H1 (cell line): ENCODE measurements at regions of chr9 and their contacts with region 1.

Region 1: GRCh38 chr9:109320742-109321448 is at the start of gene EPB41L4B:
- DNase-seq: peak; percentile 89 to 97
- H3K4me3 ChIP-seq: peak within 1 kb of the TSS; percentile 78 to 87 (median 81)
- H3K27ac ChIP-seq: no peak within 1 kb of the TSS
- H3K4me1 ChIP-seq: peaks cover 13 to 19% (median 14%) of the 10 kb centered on the region in 4 experiments
- H3K27me3 ChIP-seq: peaks cover 0 to 8% (median 0%) of the 10 kb centered on the region in 4 experiments; a peak in 2 of 7 replicates
- CTCF ChIP-seq: peak; percentile 87 to 98 (median 91)
- EP300 ChIP-seq: peak in 1 of 2 experiments; percentile 90; a peak in 2 of 3 replicates
- POLR2A ChIP-seq: no peak
- RAD21 ChIP-seq: peak; percentile 86 to 93
- total RNA-seq, gene EPB41L4B: 23.7 and 25.0 TPM in 2 replicates

Region 2: DNA sequence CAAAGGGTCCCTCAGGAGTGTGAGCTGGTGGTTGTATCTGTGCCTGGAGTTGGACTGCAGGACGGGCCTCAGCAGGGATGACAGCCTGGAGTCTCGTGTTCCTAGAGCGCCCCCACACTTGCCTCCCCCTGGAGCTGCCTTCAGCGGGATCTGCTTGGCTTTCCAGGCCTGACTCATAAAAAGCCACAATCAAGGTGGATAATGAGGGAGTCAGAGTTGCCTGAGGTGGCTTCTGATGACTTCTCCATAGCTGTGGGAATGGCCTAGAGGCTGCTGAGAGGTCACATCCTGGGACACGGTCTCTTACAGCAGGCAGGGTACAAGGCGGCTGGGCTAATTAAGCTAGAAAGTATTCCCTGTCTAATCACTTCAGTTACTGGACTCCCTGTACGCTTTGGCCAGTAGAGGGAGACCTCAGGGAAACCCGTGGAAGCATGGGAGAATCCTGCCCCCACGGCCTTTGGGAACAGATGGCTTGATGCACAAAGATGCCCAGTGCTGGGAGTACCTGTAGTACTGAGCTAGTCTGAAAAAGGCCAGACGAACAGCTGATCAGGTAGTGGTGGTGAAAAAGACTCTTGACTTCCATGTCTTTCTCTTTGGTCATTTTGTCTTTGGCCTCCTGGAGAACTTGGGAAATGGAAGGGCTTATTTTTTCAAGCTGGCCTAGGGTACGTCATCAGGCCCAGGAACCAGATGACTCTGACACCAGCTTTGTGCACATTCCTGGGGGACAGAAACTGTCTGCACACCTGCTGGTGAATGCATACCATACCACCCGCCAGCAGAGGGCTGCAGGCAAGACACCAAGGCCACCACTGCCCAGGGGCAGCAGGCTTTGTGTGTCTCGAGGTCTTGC is 137.7 kb before region 1 on chr9:
- CTCF ChIA-PET with region 1: interaction called, 14 read pairs
- POLR2A ChIA-PET with region 1: no interaction called
- DNase-seq: peak in 1 of 2 experiments; percentile 58
- H3K4me3 ChIP-seq: no peak overlapping the region
- H3K27ac ChIP-seq: no peak overlapping the region
- H3K4me1 ChIP-seq: 0 out of 7 replicates have a peak, but pooled peaks cover 0 to 2% (median 0%) of the 10 kb centered on the region in 4 experiments
- H3K27me3 ChIP-seq: no peaks in the 10 kb centered on the region
- CTCF ChIP-seq: peak; percentile 47 to 66 (median 59)
- EP300 ChIP-seq: no peak
- POLR2A ChIP-seq: no peak
- RAD21 ChIP-seq: peak; percentile 42 to 53; a peak in 3 of 4 replicates

Region 3: GRCh38 chr9:109192732-109193361 is 128.0 kb before region 1 on chr9:
- CTCF ChIA-PET with region 1: interaction called, 23 read pairs
- POLR2A ChIA-PET with region 1: no interaction called
- DNase-seq: peak; percentile 31 to 73
- H3K4me3 ChIP-seq: no peak overlapping the region
- H3K27ac ChIP-seq: no peak overlapping the region
- H3K4me1 ChIP-seq: no peaks in the 10 kb centered on the region
- H3K27me3 ChIP-seq: no peaks in the 10 kb centered on the region; a peak in 1 of 7 replicates
- CTCF ChIP-seq: peak; percentile 80 to 86 (median 81)
- EP300 ChIP-seq: no peak
- POLR2A ChIP-seq: no peak
- RAD21 ChIP-seq: peak; percentile 87

Region 4: GRCh38 chr9:109213290-109214121 is 107.4 kb before region 1 on chr9:
- CTCF ChIA-PET with region 1: interaction called, 10 read pairs
- POLR2A ChIA-PET with region 1: no interaction called
- DNase-seq: no peak
- H3K4me3 ChIP-seq: no peak overlapping the region
- H3K27ac ChIP-seq: no peak overlapping the region
- H3K4me1 ChIP-seq: no peaks in the 10 kb centered on the region
- H3K27me3 ChIP-seq: no peaks in the 10 kb centered on the region
- CTCF ChIP-seq: no peak
- EP300 ChIP-seq: no peak
- POLR2A ChIP-seq: no peak
- RAD21 ChIP-seq: no peak

Region 5: DNA sequence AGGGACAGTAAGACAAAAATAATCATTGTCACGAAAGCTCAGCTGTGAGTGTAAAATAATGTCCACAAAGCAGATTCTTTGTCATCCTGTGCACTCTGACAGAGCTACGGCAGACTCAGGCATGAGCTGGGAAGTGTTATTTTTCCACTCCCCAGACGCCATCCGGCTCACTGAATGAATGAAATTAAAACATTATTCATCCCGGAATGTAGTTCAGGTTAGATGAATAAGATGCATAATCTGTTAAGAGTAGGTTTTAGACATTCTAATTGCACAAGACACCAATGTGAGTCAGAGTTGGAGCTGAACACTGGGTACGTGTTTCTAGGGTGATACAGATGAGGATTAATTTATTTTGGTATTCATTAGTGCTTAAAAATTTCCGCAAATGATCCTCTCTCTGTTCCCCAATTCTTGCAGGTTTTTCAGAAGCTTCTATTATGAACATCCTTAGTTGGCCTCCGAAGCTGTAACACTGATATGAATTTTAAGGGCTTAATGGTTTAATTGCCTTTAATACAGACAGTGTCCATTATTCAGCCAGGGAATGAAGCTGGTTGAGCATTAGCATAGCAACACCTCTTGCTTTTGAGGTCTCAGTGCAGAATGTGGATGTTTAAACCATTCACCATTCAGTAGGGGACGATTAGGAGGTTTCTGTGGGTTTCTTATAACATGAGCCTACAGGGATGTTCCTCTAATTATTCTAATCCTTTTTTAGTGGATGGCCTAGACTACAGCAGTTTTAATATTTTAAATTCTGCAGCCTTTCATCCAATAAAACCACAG is 88.3 kb before region 1 on chr9:
- CTCF ChIA-PET with region 1: interaction called, 13 read pairs
- POLR2A ChIA-PET with region 1: interaction called, 4 read pairs
- DNase-seq: no peak
- H3K4me3 ChIP-seq: no peak overlapping the region
- H3K27ac ChIP-seq: no peak overlapping the region
- H3K4me1 ChIP-seq: no peaks in the 10 kb centered on the region
- H3K27me3 ChIP-seq: no peaks in the 10 kb centered on the region
- CTCF ChIP-seq: no peak
- EP300 ChIP-seq: no peak
- POLR2A ChIP-seq: no peak
- RAD21 ChIP-seq: no peak

Region 6: GRCh38 chr9:109244157-109245132 is 76.5 kb before region 1 on chr9:
- CTCF ChIA-PET with region 1: interaction called, 96 read pairs
- POLR2A ChIA-PET with region 1: interaction called, 4 read pairs
- DNase-seq: peak; percentile 47 to 86
- H3K4me3 ChIP-seq: no peak overlapping the region
- H3K27ac ChIP-seq: no peak overlapping the region
- H3K4me1 ChIP-seq: peaks cover 0 to 6% (median 4%) of the 10 kb centered on the region in 4 experiments; a peak in 6 of 7 replicates
- H3K27me3 ChIP-seq: no peaks in the 10 kb centered on the region
- CTCF ChIP-seq: peak; percentile 81 to 98 (median 92)
- EP300 ChIP-seq: no peak
- POLR2A ChIP-seq: no peak
- RAD21 ChIP-seq: peak; percentile 62 to 74

Region 7: GRCh38 chr9:109341565-109341964 is 20.7 kb after region 1 on chr9:
- CTCF ChIA-PET with region 1: interaction called, 10 read pairs
- POLR2A ChIA-PET with region 1: interaction called, 4 read pairs
- DNase-seq: no peak
- H3K4me3 ChIP-seq: no peak overlapping the region
- H3K27ac ChIP-seq: no peak overlapping the region
- H3K4me1 ChIP-seq: peaks cover 6 to 9% (median 7%) of the 10 kb centered on the region in 4 experiments; a peak in 5 of 7 replicates
- H3K27me3 ChIP-seq: no peaks in the 10 kb centered on the region
- CTCF ChIP-seq: no peak
- EP300 ChIP-seq: no peak
- POLR2A ChIP-seq: no peak
- RAD21 ChIP-seq: no peak

Region 8: GRCh38 chr9:109843641-109844040 is 522.7 kb after region 1 on chr9:
- CTCF ChIA-PET with region 1: no interaction called
- POLR2A ChIA-PET with region 1: no interaction called
- DNase-seq: no peak
- H3K4me3 ChIP-seq: no peak overlapping the region
- H3K27ac ChIP-seq: no peak overlapping the region
- H3K4me1 ChIP-seq: no peaks in the 10 kb centered on the region
- H3K27me3 ChIP-seq: no peaks in the 10 kb centered on the region
- CTCF ChIP-seq: no peak
- EP300 ChIP-seq: no peak
- POLR2A ChIP-seq: no peak
- RAD21 ChIP-seq: no peak